ENCODE measurements at regions of chr3 and their contacts with region 1.

Region 1: GRCh38 chr3:128524374-128525299 is 31.6 kb upstream of the GATA2 start:
- DNase-seq: no peak
- ATAC-seq: no peak
- H3K4me3 ChIP-seq: no peak overlapping the region
- H3K27ac ChIP-seq: no peak overlapping the region
- H3K4me1 ChIP-seq: no peaks in the 10 kb centered on the region
- H3K27me3 ChIP-seq: no peaks in the 10 kb centered on the region
- CTCF ChIP-seq: no peak

Region 2: DNA sequence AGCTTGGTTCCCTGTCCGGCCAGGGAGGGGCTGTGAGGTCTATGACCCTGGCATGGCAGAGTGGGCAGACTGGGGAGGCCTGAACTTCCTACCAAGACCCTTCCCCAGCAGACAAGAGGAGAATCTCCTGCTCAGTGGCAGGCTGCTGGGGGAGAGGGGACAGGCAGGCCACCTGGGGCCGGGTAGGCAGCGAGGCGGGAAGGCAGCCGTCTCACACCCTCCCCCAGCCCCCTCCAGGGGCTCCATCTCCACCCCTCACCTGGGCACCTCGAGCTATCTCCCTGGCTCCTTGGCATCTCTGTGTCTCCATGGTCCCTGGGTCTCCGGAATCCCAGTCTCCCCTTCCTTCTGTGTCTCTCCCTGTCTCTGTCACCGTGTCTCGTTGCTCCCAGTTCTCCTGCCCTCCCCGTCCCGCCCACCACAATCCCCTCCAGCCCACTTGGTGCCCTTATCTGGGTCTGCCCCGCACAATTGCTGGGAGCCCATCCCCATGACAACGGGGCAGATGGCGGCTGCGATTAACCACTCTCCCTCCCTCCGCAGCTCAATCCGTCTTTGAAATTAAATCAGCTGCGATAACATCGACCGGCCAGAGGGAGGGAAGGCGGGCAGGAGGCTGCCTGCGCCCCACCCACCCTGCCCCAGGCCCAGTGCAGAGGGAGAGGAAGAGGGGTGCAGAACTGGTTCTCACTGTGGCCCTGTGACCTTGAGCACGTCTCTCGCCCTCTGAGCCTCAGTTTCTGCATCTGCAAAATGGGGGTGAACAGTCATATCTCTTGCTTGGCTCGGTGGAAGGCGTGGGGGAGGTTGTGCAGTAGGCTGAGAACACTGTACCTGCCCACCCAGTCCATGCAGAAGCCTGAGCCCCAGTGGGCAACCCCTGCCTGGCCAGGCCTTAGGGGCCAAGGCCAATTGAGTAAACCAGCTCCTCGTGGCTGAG is 67.6 kb before region 1 on chr3:
- CTCF ChIA-PET with region 1: no interaction called
- POLR2A ChIA-PET with region 1: no interaction called
- intact Hi-C with region 1: no loop called
- DNase-seq: no peak
- ATAC-seq: no peak
- H3K4me3 ChIP-seq: no peak overlapping the region
- H3K27ac ChIP-seq: no peak overlapping the region
- H3K4me1 ChIP-seq: no peaks in the 10 kb centered on the region
- H3K27me3 ChIP-seq: no peaks in the 10 kb centered on the region
- CTCF ChIP-seq: no peak

Region 3: GRCh38 chr3:128487813-128488635 is 36.6 kb before region 1 on chr3:
- CTCF ChIA-PET with region 1: no interaction called
- POLR2A ChIA-PET with region 1: no interaction called
- intact Hi-C with region 1: no loop called
- DNase-seq: peak; percentile 83
- ATAC-seq: peak; percentile 60
- H3K4me3 ChIP-seq: peak overlapping the region; percentile 93
- H3K27ac ChIP-seq: peak overlapping the region; percentile 60
- H3K4me1 ChIP-seq: peaks cover 34% of the 10 kb centered on the region
- H3K27me3 ChIP-seq: no peaks in the 10 kb centered on the region
- CTCF ChIP-seq: no peak

Region 4: DNA sequence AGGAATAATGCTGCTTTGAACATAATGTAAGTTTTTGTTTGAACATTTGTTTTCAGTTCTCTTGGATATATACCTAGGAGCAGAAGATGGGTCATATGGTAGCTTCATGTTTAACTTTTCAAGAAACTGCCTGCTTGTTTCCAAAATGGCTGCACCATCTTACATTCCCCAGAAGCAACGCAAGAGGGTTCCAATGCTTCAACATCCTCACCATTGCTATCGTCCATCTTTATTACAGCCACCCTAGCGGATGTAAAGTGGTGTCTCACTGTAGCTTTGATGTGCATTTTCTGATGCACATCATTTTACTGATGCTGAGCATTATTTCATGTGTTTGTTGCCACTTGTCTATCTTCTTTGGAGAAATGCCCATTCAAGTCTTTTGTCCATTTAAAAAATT is 14.7 kb after region 1 on chr3:
- CTCF ChIA-PET with region 1: no interaction called
- POLR2A ChIA-PET with region 1: interaction called, 15 read pairs
- intact Hi-C with region 1: no loop called
- DNase-seq: no peak
- ATAC-seq: no peak
- H3K4me3 ChIP-seq: no peak overlapping the region
- H3K27ac ChIP-seq: no peak overlapping the region
- H3K4me1 ChIP-seq: no peaks in the 10 kb centered on the region
- H3K27me3 ChIP-seq: no peaks in the 10 kb centered on the region; the same call in 1 of the 2 replicates
- CTCF ChIP-seq: no peak

Measured in PC-3 (cell line).